Natural killer cell (primary cell): ENCODE measurements at regions of chr12 and their contacts with region 1.

Region 1: DNA sequence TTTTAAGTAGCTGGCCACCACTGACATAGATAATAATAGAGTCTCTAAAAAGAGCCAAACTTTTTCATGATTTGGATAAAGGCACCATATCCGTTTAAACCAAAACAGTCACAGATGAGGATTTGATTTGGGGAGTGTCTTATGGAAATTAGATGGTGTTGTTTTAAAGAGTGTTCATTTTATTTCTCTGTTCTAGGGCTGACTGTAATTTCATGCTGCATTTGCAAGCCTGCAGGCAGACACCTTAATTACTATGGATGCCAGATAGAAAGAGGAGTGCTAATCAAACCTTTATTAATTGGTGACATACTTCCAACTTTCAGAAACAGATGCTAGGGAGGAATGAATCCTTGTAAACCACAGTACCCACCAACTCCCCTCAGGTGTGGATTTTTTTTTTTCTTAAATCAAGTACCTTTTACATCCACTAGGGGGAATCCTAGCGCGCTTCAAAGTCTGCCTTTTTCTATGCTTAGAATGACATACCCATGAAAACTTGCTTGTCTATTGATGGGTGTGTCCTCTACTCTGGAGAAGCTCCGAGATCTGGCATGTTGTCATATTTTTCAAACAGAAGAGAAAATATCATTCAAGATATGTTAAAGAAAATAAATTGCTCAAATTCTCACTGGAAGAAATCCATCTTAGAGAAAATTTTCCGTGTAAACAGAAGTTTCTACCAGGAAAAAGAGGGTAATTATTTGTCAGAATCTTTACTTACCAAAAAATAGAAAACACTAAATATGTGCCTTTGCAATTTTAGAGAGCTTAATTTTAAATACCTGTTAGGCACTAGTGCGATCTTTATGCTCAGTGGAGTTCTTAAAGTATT is 14.2 kb upstream of the PLXNC1 start:
- DNase-seq: peak in 1 of 2 donors; percentile 79
- ATAC-seq: peak; percentile 77 to 92 (median 90)
- H3K4me3 ChIP-seq: no peak overlapping the region
- H3K4me3 Mint-ChIP-seq: no peak overlapping the region
- H3K27ac ChIP-seq: no peak overlapping the region
- H3K27ac Mint-ChIP-seq: no peak overlapping the region
- H3K4me1 ChIP-seq: no peaks in the 10 kb centered on the region
- H3K4me1 Mint-ChIP-seq: no peaks in the 10 kb centered on the region
- H3K27me3 ChIP-seq: no peaks in the 10 kb centered on the region
- H3K27me3 Mint-ChIP-seq: peaks cover 0 to 6% of the 10 kb centered on the region in 2 donors
- CTCF ChIP-seq: peak; percentile 90

Region 2: DNA sequence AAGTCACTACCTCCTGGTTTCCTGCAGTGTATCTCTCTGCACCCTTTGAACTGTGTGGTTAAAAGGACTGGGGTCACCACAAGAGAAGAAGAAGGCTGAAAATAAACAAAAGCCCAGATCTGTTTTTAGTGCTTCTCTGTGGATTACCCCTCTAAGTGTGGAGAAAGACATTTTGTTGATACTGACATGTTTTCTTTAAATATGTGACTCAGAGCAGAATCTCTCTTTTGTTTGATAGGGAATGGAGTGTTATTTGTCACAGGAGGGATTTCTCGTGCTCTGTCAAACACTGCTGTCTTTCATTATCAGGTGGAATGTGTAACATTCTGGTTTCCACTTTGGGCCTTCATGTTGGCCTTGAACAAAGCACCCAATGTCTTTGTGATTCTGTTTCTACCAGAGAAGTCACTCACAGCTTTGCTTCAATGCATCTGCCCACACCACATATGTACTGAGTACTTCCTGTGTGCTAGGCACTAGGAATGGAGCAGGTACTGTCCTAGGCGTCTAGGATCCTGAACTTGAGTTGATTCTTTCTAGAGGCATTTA is 96.3 kb after region 1 on chr12:
- intact Hi-C with region 1: no loop called
- DNase-seq: peak in 1 of 2 donors; percentile 13
- ATAC-seq: peak; percentile 32 to 42 (median 34)
- H3K4me3 ChIP-seq: no peak overlapping the region
- H3K4me3 Mint-ChIP-seq: peak overlapping the region; percentile 21
- H3K27ac ChIP-seq: peak overlapping the region; percentile 5
- H3K27ac Mint-ChIP-seq: peak overlapping the region; percentile 67 to 80
- H3K4me1 ChIP-seq: peaks cover 3% of the 10 kb centered on the region
- H3K4me1 Mint-ChIP-seq: peaks cover 11 to 13% of the 10 kb centered on the region in 2 donors
- H3K27me3 ChIP-seq: no peaks in the 10 kb centered on the region
- H3K27me3 Mint-ChIP-seq: no peaks in the 10 kb centered on the region
- CTCF ChIP-seq: no peak

Region 3: DNA sequence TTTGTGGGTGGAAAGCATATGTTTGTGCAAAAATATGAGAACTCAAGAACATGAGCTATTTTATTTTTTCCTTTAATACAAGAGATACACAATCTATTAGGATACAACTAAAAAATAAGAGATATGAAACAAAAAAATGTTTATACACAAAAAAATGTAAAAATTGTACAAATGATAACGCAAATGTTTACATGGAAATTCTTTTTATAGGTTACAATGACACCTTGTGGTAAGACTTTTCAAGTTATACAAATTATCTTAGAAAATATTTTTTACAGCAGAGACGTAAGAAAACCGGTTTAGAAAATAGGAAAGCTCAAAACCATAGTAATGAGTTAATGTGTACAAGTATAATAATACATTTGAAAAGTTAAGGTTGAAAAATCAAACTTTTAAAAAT is 300.0 kb after region 1 on chr12:
- intact Hi-C with region 1: loop called (anchors 1 kb)
- DNase-seq: peak in 1 of 2 donors; percentile 4
- ATAC-seq: no peak
- H3K4me3 ChIP-seq: no peak overlapping the region
- H3K4me3 Mint-ChIP-seq: no peak overlapping the region
- H3K27ac ChIP-seq: no peak overlapping the region
- H3K27ac Mint-ChIP-seq: no peak overlapping the region
- H3K4me1 ChIP-seq: peaks cover 6% of the 10 kb centered on the region
- H3K4me1 Mint-ChIP-seq: peaks cover 9 to 11% of the 10 kb centered on the region in 2 donors
- H3K27me3 ChIP-seq: no peaks in the 10 kb centered on the region
- H3K27me3 Mint-ChIP-seq: no peaks in the 10 kb centered on the region
- CTCF ChIP-seq: no peak

Region 4: GRCh38 chr12:94532490-94533422 is 398.6 kb after region 1 on chr12:
- intact Hi-C with region 1: loop called (anchors 1 kb)
- DNase-seq: peak; percentile 63 to 81
- ATAC-seq: peak; percentile 74 to 88 (median 77)
- H3K4me3 ChIP-seq: no peak overlapping the region
- H3K4me3 Mint-ChIP-seq: no peak overlapping the region
- H3K27ac ChIP-seq: no peak overlapping the region
- H3K27ac Mint-ChIP-seq: no peak overlapping the region
- H3K4me1 ChIP-seq: no peaks in the 10 kb centered on the region
- H3K4me1 Mint-ChIP-seq: peaks cover 8% of the 10 kb centered on the region in 2 donors
- H3K27me3 ChIP-seq: no peaks in the 10 kb centered on the region
- H3K27me3 Mint-ChIP-seq: peaks cover 6 to 8% of the 10 kb centered on the region in 2 donors
- CTCF ChIP-seq: peak; percentile 65